Activated CD4-positive, alpha-beta memory T cell treated with anti-CD3 and anti-CD28 coated beads for 36 hours (primary cell): ENCODE measurements at regions of chr10 and their contacts with region 1.

Region 1: GRCh38 chr10:62050893-62051433 is 149.5 kb downstream of the ARID5B start:
- DNase-seq: peak; percentile 91
- H3K4me3 Mint-ChIP-seq: peak overlapping the region; percentile 94
- H3K27ac Mint-ChIP-seq: peak overlapping the region; percentile 96
- H3K4me1 Mint-ChIP-seq: peaks cover 71% of the 10 kb centered on the region
- H3K27me3 Mint-ChIP-seq: no peaks in the 10 kb centered on the region

Region 2: GRCh38 chr10:61262486-61263261 is 788.3 kb before region 1 on chr10:
- CTCF ChIA-PET with region 1: no interaction called
- POLR2A ChIA-PET with region 1: no interaction called
- intact Hi-C with region 1: no loop called
- DNase-seq: no peak
- H3K4me3 Mint-ChIP-seq: no peak overlapping the region
- H3K27ac Mint-ChIP-seq: no peak overlapping the region
- H3K4me1 Mint-ChIP-seq: no peaks in the 10 kb centered on the region
- H3K27me3 Mint-ChIP-seq: peaks cover 24% of the 10 kb centered on the region

Region 3: GRCh38 chr10:61896854-61897661 is 153.9 kb before region 1 on chr10:
- CTCF ChIA-PET with region 1: interaction called, 14 read pairs
- POLR2A ChIA-PET with region 1: interaction called, 268 read pairs
- intact Hi-C with region 1: loop called (anchors 1 kb)
- DNase-seq: peak; percentile 70
- H3K4me3 Mint-ChIP-seq: peak overlapping the region; percentile 66
- H3K27ac Mint-ChIP-seq: peak overlapping the region; percentile 95
- H3K4me1 Mint-ChIP-seq: peaks cover 43% of the 10 kb centered on the region
- H3K27me3 Mint-ChIP-seq: no peaks in the 10 kb centered on the region

Region 4: DNA sequence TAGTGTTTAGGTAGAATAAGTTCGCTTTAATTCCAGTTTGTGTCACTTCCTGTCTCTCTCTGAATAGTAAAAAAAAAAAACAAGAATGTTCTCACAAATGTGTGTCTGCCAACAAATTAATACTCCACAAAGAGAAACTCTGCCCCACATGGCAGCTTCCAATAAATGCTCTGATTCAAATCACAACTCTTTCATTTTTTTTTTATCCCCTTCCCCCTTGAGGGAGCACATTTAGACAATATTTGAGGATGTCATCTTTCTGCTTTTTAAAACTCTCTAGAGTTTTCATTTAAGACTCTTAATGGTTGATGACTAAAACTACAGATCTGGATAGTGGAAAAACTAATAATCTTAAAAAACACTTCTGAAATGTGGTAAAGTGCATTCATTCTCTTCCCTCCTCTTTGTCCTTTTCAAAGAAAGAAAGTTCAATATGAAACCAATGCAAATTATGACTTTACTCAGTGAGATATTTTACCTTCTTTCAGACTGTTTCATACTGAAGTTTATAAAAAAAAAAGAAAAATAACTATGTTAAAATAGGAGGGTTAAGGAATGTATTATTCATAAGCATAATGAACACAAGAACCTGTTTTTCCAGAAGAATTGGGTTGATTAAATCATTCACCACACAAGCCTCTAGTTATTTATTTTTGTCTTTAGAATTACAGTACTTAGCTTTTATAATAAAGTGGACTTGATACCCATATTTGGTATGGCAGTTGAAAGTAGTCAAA is 107.1 kb before region 1 on chr10:
- CTCF ChIA-PET with region 1: interaction called, 6 read pairs
- POLR2A ChIA-PET with region 1: interaction called, 164 read pairs
- intact Hi-C with region 1: loop called (anchors 1 kb)
- DNase-seq: peak; percentile 34
- H3K4me3 Mint-ChIP-seq: peak overlapping the region; percentile 70
- H3K27ac Mint-ChIP-seq: peak overlapping the region; percentile 92
- H3K4me1 Mint-ChIP-seq: peaks cover 57% of the 10 kb centered on the region
- H3K27me3 Mint-ChIP-seq: no peaks in the 10 kb centered on the region

Region 5: GRCh38 chr10:61992671-61993668 is 58.0 kb before region 1 on chr10:
- CTCF ChIA-PET with region 1: interaction called, 19 read pairs
- POLR2A ChIA-PET with region 1: interaction called, 136 read pairs
- intact Hi-C with region 1: loop called (anchors 1 kb)
- DNase-seq: peak; percentile 75
- H3K4me3 Mint-ChIP-seq: peak overlapping the region; percentile 57
- H3K27ac Mint-ChIP-seq: peak overlapping the region; percentile 99
- H3K4me1 Mint-ChIP-seq: peaks cover 85% of the 10 kb centered on the region
- H3K27me3 Mint-ChIP-seq: no peaks in the 10 kb centered on the region

Region 6: GRCh38 chr10:62063795-62064472 is 13.0 kb after region 1 on chr10:
- CTCF ChIA-PET with region 1: interaction called, 8 read pairs
- POLR2A ChIA-PET with region 1: interaction called, 116 read pairs
- intact Hi-C with region 1: loop called (anchors 1 kb)
- DNase-seq: no peak
- H3K4me3 Mint-ChIP-seq: peak overlapping the region; percentile 41
- H3K27ac Mint-ChIP-seq: peak overlapping the region; percentile 93
- H3K4me1 Mint-ChIP-seq: peaks cover 90% of the 10 kb centered on the region
- H3K27me3 Mint-ChIP-seq: no peaks in the 10 kb centered on the region

Region 7: GRCh38 chr10:62098278-62099121 is 47.5 kb after region 1 on chr10:
- CTCF ChIA-PET with region 1: no interaction called
- POLR2A ChIA-PET with region 1: no interaction called
- intact Hi-C with region 1: no loop called
- DNase-seq: no peak
- H3K4me3 Mint-ChIP-seq: no peak overlapping the region
- H3K27ac Mint-ChIP-seq: peak overlapping the region; percentile 43
- H3K4me1 Mint-ChIP-seq: peaks cover 22% of the 10 kb centered on the region
- H3K27me3 Mint-ChIP-seq: no peaks in the 10 kb centered on the region

Region 8: GRCh38 chr10:62384057-62384446 is 333.1 kb after region 1 on chr10:
- CTCF ChIA-PET with region 1: no interaction called
- POLR2A ChIA-PET with region 1: no interaction called
- intact Hi-C with region 1: loop called (anchors 2 kb)
- DNase-seq: peak; percentile 73
- H3K4me3 Mint-ChIP-seq: no peak overlapping the region
- H3K27ac Mint-ChIP-seq: peak overlapping the region; percentile 48
- H3K4me1 Mint-ChIP-seq: peaks cover 61% of the 10 kb centered on the region
- H3K27me3 Mint-ChIP-seq: no peaks in the 10 kb centered on the region

Region 9: GRCh38 chr10:62811159-62811875 is 760.4 kb after region 1 on chr10:
- CTCF ChIA-PET with region 1: no interaction called
- POLR2A ChIA-PET with region 1: interaction called, 3 read pairs
- intact Hi-C with region 1: loop called (anchors 1 kb)
- DNase-seq: peak; percentile 94
- H3K4me3 Mint-ChIP-seq: peak overlapping the region; percentile 88
- H3K27ac Mint-ChIP-seq: peak overlapping the region; percentile 88
- H3K4me1 Mint-ChIP-seq: peaks cover 79% of the 10 kb centered on the region
- H3K27me3 Mint-ChIP-seq: no peaks in the 10 kb centered on the region